RWPE1 (cell line): ENCODE measurements at regions of chr1 and their contacts with region 1.

Region 1: GRCh38 chr1:42924082-42924850 is 34.4 kb downstream of the SLC2A1 start:
- DNase-seq: peak; percentile 91
- H3K27ac ChIP-seq: peak overlapping the region; percentile 94
- CTCF ChIP-seq: no peak

Region 2: DNA sequence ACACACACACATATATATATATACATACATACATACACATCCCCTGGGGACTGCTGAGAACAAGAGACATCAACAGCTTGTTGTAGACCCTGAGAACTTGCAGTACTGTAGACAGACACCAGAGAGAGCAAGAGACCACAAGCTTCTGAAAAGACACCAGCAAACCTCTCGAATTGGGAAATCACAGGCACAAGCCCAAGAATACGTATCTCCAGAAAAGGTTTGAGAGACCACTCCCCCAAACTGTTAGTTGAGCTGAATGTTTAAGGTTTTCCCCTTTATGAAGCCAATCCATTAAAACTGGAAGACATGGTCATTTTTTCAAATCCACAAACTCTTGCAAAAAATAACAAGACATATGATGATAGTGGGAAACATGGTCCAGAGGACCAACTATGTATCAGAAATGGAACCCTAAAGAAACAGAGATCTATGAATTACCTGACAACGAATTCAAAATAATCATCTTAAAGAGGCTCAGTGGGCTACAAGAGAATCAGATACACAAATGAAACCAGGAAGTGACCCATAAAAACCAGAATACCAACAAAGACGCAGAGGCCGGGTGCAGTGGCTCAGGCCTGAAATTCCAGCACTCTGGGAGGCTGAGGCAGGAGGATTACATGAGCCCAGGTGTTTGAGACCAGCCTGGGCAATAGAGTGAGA is 10.7 kb before region 1 on chr1:
- CTCF ChIA-PET with region 1: interaction called, 12 read pairs
- POLR2A ChIA-PET with region 1: no interaction called
- DNase-seq: peak; percentile 70
- H3K27ac ChIP-seq: no peak overlapping the region
- CTCF ChIP-seq: peak; percentile 74

Region 3: GRCh38 chr1:42936309-42937078 is 12.2 kb after region 1 on chr1:
- CTCF ChIA-PET with region 1: interaction called, 11 read pairs
- POLR2A ChIA-PET with region 1: interaction called, 3 read pairs
- DNase-seq: peak; percentile 79
- H3K27ac ChIP-seq: peak overlapping the region; percentile 97
- CTCF ChIP-seq: no peak